Aorta (tissue), 5 donors: ENCODE measurements at regions of chr3 and their contacts with region 1.

Region 1: GRCh38 chr3:29759411-29760225 is 478.7 kb downstream of the RBMS3 start:
- DNase-seq: no peak
- ATAC-seq: peak; percentile 33
- H3K4me3 ChIP-seq: peak overlapping the region in 1 of 2 donors; percentile 26
- H3K27ac ChIP-seq: peak overlapping the region; percentile 49 to 97
- H3K4me1 ChIP-seq: peaks cover 6 to 20% of the 10 kb centered on the region in 2 donors
- H3K27me3 ChIP-seq: no peaks in the 10 kb centered on the region

Region 2: GRCh38 chr3:29525254-29525881 is 234.2 kb before region 1 on chr3:
- intact Hi-C with region 1: loop called in 1 of 2 experiments (anchors 5 kb)
- DNase-seq: peak in 1 of 2 donors; percentile 74
- ATAC-seq: peak; percentile 93
- H3K4me3 ChIP-seq: no peak overlapping the region
- H3K27ac ChIP-seq: peak overlapping the region; percentile 43 to 44
- H3K4me1 ChIP-seq: peaks cover 2 to 6% of the 10 kb centered on the region in 2 donors
- H3K27me3 ChIP-seq: no peaks in the 10 kb centered on the region

Region 3: GRCh38 chr3:29789686-29790085 is 30.1 kb after region 1 on chr3:
- intact Hi-C with region 1: no loop called
- DNase-seq: no peak
- ATAC-seq: no peak
- H3K4me3 ChIP-seq: no peak overlapping the region
- H3K27ac ChIP-seq: no peak overlapping the region
- H3K4me1 ChIP-seq: peaks cover 0 to 1% of the 10 kb centered on the region in 2 donors
- H3K27me3 ChIP-seq: no peaks in the 10 kb centered on the region

Region 4: DNA sequence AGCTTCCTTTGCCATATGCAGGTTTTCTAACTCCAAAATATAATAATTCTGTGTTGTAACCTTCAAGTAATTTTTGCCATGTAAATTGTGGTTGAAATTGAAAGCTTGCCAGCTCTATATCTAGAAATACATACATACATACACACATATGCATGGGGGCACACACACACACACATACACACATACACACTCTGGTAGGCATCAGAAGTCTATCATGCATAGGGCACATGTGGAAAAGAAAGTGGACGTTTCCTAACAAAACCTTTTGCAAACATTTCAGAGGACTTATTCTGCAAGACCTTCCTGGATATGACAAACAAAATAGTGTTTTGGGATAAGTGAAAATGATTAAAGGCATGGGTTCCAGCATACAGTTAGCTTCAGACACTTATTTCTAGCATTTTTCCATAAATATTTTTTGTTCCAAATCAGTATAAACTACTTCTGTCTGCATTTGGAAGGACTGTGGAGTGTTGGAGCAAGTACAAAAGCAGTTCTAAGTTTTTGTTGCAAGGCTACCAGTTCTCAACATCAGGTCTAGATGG is 100.2 kb after region 1 on chr3:
- intact Hi-C with region 1: no loop called
- DNase-seq: no peak
- ATAC-seq: no peak
- H3K4me3 ChIP-seq: no peak overlapping the region
- H3K27ac ChIP-seq: no peak overlapping the region
- H3K4me1 ChIP-seq: peaks cover 0 to 2% of the 10 kb centered on the region in 2 donors
- H3K27me3 ChIP-seq: no peaks in the 10 kb centered on the region